PC-9 (cell line): ENCODE measurements at regions of chr3 and their contacts with region 1.

Region 1: GRCh38 chr3:105686278-105686897 is 182.4 kb downstream of the CBLB start:
- DNase-seq: peak in 1 of 2 experiments; percentile 62
- H3K4me3 ChIP-seq: no peak overlapping the region
- H3K27ac ChIP-seq: no peak overlapping the region
- H3K4me1 ChIP-seq: no peaks in the 10 kb centered on the region
- H3K27me3 ChIP-seq: no peaks in the 10 kb centered on the region
- CTCF ChIP-seq: peak; percentile 97

Region 2: DNA sequence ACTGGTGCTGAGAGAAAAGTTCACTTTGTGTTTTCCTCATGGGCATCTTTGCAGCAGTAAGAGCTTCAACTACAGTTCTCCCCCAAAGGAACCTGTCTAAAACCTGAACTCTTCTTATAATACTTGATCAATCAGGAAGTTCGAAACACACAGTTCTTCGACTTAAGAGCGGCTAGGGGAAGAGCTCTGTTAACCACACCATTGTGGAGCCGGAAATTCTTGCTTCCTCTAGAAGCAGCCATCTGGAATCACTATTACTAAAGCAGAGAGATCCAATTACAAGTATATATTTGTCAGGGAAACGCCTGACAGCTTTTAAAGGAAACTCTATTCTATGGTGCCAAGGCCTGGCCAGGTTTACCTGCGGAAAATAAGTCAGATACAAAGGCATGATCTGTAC is 519.8 kb after region 1 on chr3:
- CTCF ChIA-PET with region 1: no interaction called
- POLR2A ChIA-PET with region 1: no interaction called
- intact Hi-C with region 1: loop called (anchors 5 kb)
- DNase-seq: no peak
- H3K4me3 ChIP-seq: no peak overlapping the region
- H3K27ac ChIP-seq: no peak overlapping the region
- H3K4me1 ChIP-seq: 0 out of 2 replicates have a peak, but pooled peaks cover 4% of the 10 kb centered on the region
- H3K27me3 ChIP-seq: no peaks in the 10 kb centered on the region
- CTCF ChIP-seq: no peak

Region 3: DNA sequence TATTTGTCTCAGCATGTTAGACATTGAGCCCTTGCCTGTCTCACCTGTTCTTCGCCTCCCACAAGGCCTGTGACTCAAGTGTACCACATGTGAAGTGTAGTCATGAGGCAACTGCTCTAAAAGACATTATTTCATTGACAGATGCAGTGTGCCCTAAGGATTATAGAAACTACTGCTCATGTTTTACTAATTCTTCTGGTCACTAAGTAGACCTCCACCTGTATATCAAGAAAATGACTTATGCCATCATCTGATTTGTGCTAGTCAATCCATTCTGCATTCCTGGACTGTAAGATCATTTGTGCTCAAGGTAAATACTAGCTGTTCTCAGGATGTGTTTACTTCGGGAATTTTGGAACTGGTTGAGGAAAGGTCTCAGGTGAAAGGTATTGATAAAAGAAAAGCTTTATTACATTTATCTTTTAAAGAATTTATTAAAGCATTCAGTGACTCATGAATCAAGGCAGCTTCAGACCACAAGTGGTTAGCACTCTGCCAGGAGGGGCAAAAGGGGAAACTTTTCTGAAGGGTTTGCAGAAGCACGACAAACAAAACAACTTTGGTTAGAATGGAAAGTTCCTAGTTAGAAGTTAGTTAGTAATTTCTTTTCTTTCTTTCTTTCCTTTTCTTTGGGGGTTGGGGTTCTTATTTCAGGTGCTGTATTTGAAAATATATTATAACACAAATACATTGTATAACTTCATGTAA is 647.7 kb after region 1 on chr3:
- CTCF ChIA-PET with region 1: no interaction called
- POLR2A ChIA-PET with region 1: no interaction called
- intact Hi-C with region 1: loop called (anchors 5 kb)
- DNase-seq: peak; percentile 30 to 97
- H3K4me3 ChIP-seq: peak overlapping the region; percentile 6; the same call in 1 of the 2 replicates
- H3K27ac ChIP-seq: peak overlapping the region; percentile 64
- H3K4me1 ChIP-seq: peaks cover 25% of the 10 kb centered on the region
- H3K27me3 ChIP-seq: no peaks in the 10 kb centered on the region
- CTCF ChIP-seq: no peak